Activated B cell treated with CpG ODN at 0.5 μM for 24 hours (primary cell): ENCODE measurements at regions of chr9 and their contacts with region 1.

Region 1: GRCh38 chr9:7209016-7209715 is 451.4 kb downstream of the KDM4C start:
- DNase-seq: no peak
- ATAC-seq: no peak
- H3K4me3 Mint-ChIP-seq: no peak overlapping the region
- H3K27ac Mint-ChIP-seq: no peak overlapping the region
- H3K4me1 Mint-ChIP-seq: no peaks in the 10 kb centered on the region
- H3K27me3 Mint-ChIP-seq: peaks cover 10% of the 10 kb centered on the region
- CTCF ChIP-seq: no peak

Region 2: DNA sequence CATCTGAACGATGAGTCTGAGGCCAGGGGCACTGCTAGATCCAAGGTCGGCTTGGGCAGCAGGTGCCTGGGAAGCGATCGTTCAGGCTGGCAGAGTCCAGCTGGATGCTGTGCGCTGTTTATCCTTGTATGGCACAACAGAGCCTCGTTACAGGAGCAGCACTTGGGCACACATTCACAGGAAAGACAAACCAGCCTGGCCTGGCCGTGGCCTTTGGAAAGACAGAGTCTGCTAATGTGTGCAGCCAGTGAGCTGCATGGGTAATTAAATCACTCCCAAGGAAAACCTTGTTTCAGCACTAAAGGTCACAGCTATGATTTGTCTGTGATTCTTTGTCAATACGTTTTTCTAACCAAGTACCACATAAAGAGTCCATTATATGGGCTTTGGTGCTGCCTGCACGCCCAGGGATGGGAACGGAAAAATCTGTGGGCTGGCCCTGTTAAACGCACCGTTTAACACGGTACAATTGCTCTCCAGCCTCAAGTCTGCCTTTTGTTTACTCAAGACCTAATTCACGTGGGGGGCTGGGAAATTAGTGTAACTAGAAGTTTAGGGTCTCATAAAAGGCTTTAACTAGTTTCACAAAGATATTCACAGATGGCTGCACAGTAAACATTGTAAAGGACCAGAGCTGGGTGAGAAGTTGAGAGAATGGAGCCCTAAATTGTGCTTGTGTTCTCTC is 57.9 kb after region 1 on chr9:
- CTCF ChIA-PET with region 1: no interaction called
- POLR2A ChIA-PET with region 1: no interaction called
- intact Hi-C with region 1: loop called (anchors 10 kb)
- DNase-seq: no peak
- ATAC-seq: no peak
- H3K4me3 Mint-ChIP-seq: no peak overlapping the region
- H3K27ac Mint-ChIP-seq: no peak overlapping the region
- H3K4me1 Mint-ChIP-seq: no peaks in the 10 kb centered on the region
- H3K27me3 Mint-ChIP-seq: peaks cover 14% of the 10 kb centered on the region
- CTCF ChIP-seq: no peak